GM18951 (cell line): ENCODE measurements at regions of chr6 and their contacts with region 1.

Region 1: DNA sequence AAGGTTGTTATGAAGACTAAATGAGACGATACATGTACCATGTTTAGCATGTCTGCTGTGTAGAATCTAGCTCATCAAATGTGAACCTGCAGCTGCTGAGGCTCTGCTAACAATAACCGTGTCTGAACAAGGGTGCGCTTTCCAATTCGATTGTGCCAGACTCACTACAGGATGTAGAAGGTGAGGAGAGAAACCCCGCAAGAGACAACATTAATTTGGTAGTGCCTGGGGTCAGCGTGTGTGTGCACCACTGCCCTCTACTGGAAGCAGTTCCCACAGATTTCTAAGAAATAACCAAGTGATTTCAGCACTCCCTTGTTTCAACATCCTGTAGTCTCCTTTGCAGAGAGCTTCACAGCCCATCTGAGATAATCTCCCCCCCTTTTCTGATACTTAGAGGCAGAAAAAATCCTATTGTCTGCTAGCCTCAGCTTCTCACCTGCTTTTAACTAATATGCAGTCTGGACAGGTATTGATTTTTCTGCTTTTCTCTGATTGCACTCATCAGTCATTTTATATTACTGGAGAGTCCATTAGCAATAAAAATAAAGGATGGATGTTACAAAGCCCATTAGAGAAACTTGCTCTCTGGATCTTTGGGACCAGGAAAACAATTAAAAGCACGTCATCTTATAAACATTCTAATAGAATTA is 96.7 kb upstream of the BACH2 start:
- POLR2A ChIP-seq: no peak

Region 2: DNA sequence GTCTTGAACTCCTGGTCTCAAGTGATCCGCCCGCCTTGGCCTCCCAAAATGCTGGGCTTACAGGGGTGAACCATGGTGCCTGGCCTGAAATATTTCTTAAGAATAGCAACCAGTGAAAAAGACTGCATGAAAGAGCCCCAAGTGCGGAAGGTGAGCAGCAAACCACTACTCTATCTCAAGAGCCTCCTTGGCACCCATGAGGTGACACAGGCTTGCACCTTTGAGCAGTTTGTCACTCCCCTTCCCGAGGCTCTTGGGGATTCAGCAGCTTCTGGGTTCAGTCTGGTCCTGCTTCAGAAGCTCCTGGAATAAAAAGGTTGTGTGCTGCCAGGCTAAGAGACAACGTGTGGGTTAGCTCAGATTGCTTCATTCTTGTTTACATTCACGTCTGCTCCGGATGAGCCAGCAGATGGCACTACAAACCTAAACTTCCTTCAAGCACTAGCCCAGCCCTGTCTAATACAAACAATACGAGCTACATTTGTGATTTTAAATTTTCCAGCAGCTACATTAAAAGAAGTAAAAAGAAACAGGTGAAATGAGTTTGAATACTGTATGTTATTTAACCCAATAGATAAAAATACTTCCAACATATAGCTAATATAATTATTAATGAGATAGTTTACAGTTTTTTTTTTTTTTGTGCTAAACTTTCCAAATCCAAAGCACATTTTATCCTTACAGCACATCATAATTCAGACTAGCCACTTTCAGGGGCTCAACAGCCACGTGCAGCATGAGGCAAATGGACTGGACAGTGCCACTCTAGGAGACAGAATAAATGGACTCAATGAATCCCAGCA is 452.9 kb before region 1 on chr6:
- in situ Hi-C with region 1: loop called (anchors 25 kb)
- POLR2A ChIP-seq: no peak

Region 3: DNA sequence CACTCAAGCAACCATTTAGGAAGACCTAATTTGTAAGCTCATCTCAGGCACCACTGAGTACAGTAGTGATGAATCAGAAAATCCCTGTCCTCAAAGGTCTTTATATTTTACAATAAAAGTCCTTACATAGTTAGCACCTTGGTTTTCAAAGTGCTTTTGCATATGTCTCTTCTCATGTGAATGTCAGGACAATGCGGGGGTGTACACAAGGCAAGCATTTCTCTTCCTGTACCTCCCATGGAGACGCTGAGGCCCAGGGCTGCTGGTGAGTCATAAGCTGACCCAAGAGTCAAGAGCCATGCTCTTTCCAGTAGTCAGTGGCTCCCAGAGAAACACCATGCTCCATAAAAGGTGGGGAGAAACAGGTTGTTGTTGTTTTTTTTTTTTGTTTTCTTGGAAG is 325.1 kb before region 1 on chr6:
- in situ Hi-C with region 1: no loop called
- POLR2A ChIP-seq: no peak

Region 4: GRCh38 chr6:90508753-90509152 is 115.4 kb after region 1 on chr6:
- in situ Hi-C with region 1: no loop called
- POLR2A ChIP-seq: no peak